ENCODE measurements at regions of chr10 and their contacts with region 1.

Region 1: GRCh38 chr10:72692057-72692910 is at the start of gene MCU:
- DNase-seq: peak; percentile 97
- H3K4me3 ChIP-seq: peak within 1 kb of the TSS; percentile 78 to 81
- H3K27ac ChIP-seq: peak within 1 kb of the TSS; percentile 87 to 91
- H3K4me1 ChIP-seq: peaks cover 6% of the 10 kb centered on the region
- H3K27me3 ChIP-seq: no peaks in the 10 kb centered on the region
- CTCF ChIP-seq: peak in 1 of 4 experiments; percentile 8
- POLR2A ChIP-seq: peak; percentile 94
- total RNA-seq, gene MCU: 11.0 to 24.2 TPM

Region 2: DNA sequence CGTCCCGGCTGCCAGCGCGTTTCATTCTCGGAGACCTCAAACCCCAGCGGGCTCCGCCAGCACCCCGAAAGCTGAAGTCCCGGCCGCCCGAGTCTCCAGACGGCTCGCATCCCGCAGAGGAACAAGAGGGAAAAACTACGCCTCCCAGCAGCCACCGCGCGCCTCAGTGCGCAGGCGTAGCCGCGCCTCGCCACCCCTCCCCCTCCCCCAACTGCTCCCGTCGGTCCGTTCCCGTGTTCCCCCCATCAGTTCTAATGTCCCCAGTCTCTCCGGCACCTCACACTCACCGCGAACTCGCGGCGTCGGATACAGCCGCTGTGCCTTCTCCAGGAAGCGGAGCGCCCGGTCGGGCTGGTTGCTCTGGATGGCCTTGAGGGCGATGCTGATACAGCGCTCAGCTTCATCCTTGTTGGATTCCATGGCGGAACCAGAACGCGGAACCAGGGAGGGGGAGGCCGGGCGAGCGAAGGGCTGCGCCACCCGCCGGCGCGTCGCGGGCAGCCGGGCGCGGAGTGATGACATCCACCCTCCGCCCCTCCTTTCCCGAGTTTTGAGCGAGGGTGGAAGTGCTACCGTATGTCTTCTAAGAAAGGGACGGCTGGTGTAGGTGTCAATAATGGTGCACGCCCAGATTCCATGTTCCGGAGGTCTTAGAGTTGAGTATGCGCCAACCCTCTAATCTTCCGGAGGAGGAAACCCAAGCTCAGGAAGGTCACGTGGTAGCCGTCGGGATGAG is 337.6 kb before region 1 on chr10 and contains the start of gene DNAJB12:
- intact Hi-C with region 1: loop called (anchors 5 kb)
- DNase-seq: peak; percentile 83
- H3K4me3 ChIP-seq: peak within 1 kb of the TSS; percentile 53 to 81
- H3K27ac ChIP-seq: peak within 1 kb of the TSS; percentile 91 to 97
- H3K4me1 ChIP-seq: peaks cover 11% of the 10 kb centered on the region
- H3K27me3 ChIP-seq: no peaks in the 10 kb centered on the region
- CTCF ChIP-seq: peak in 1 of 4 experiments; percentile 39
- POLR2A ChIP-seq: peak; percentile 76
- total RNA-seq, gene DNAJB12: 33.0 to 55.9 TPM

Region 3: DNA sequence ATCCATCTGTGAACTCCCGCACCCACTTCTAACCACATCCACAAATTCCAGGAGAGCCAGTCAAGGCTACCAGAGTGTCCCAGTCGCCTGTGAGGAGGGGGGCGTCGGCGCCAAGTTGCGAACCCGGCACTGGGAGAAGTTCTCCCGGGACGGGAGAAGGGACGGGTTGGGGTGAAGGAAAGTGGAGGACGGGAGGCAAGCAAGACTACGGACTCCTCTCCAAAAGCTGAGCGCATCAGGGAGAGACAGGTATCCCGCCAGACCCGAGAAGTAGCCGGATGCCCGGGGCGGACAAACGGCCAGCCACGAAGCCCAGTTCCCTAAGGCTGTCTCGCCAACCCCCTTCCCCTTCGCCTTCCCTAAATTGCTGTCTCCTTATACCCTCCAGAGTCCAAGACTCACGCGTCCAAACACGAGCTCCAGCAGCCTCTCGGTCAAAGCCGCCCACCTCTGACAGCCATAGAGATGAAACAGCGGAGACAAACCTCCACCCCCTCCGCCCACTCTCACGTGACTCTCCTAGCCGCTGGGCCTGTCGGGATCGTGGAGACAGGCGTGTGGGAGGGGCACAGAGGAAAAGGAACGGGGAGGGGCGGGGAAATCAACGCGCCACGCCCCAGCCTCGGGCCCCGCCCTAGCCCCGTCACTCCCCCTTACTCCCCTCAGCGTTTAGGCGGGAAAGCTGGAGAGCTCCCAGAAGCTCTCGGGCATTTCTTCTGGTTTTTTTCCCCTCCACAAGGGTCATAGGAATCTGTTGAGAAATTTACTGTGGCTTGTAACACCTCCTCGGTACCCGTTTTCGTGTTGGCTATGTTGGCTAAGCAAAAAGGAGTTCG is 66.5 kb before region 1 on chr10 and contains the start of gene MICU1:
- intact Hi-C with region 1: loop called (anchors 5 kb)
- DNase-seq: peak; percentile 96
- H3K4me3 ChIP-seq: peak within 1 kb of the TSS; percentile 72 to 76
- H3K27ac ChIP-seq: peak within 1 kb of the TSS; percentile 85 to 86
- H3K4me1 ChIP-seq: peaks cover 4% of the 10 kb centered on the region
- H3K27me3 ChIP-seq: no peaks in the 10 kb centered on the region
- CTCF ChIP-seq: no peak
- POLR2A ChIP-seq: peak; percentile 94
- total RNA-seq, gene MICU1: 41.0 to 42.0 TPM

Region 4: DNA sequence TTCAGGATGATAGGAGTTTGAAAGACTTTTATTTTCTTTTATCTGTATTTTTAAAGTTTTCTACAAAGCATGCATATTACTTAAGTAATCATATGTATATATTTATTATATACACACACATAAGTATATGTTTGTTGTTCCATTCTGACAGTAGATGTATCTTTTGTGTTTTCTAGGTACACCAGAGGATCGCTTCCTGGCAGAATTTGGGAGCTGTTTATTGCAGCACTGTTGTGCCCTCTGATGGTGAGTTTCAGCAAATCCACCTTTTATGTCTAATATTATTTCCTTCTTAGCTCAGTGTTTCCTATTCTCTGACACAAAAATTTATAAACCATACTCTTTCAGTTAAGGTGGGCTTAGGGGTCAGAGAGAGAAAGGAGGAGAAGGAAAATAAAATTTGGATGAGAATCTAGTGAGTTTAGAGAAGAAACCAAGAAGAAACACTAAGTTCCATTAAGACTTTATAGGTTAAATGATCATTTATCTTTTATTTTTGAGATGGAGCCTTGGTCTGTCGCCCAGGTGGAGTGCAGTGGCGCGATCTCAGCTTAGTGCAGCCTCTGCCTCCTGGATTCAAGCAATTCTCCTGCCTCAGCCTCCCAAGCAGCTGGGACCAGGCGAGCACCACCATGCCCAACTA is 142.0 kb after region 1 on chr10:
- intact Hi-C with region 1: loop called (anchors 2 kb)
- DNase-seq: peak; percentile 43
- H3K4me3 ChIP-seq: no peak overlapping the region
- H3K27ac ChIP-seq: no peak overlapping the region
- H3K4me1 ChIP-seq: no peaks in the 10 kb centered on the region
- H3K27me3 ChIP-seq: no peaks in the 10 kb centered on the region
- CTCF ChIP-seq: peak in 3 of 4 experiments; percentile 50 to 76 (median 75)
- POLR2A ChIP-seq: no peak

Region 5: DNA sequence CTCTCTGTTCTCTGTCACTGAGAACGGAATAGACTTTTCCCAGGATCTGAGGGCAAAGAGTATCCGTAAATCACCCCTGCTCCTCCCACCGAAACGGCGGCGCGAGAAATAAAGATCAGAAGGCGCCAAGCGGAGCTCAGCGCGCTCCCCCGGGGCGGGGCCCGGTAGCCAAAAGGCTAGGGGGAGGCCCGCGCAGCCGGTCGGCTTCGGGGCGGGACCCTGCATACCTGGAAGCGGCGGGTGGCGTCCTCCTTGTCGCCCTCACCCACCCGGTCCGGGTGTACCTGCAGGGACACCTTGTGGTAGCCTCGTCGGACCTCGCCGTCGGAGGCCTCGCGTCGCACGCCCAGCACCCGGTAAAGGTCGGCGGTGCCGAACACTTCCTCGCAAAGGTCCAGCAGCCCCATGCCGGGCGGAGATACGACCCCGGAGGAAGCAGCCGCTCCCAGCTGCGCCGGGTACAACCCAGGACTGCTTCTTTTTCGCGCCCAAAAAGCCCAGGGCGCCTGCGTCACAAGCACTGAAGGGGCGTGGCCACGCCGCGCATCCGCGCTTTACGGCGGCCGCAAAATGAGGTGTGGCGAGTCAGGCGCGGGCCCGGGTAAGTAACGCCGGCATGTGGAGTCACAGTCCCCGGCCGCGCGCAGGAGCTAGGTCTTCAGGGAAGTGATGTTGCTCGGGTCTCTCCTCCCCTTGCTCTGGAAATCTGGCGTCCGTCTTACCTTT is 554.7 kb after region 1 on chr10 and contains the start of gene DNAJC9:
- intact Hi-C with region 1: no loop called
- DNase-seq: peak; percentile 95
- H3K4me3 ChIP-seq: peak within 1 kb of the TSS; percentile 71 to 79
- H3K27ac ChIP-seq: peak within 1 kb of the TSS; percentile 81 to 83
- H3K4me1 ChIP-seq: peaks cover 14% of the 10 kb centered on the region
- H3K27me3 ChIP-seq: no peaks in the 10 kb centered on the region
- CTCF ChIP-seq: peak; percentile 7 to 52 (median 32)
- POLR2A ChIP-seq: peak; percentile 75
- total RNA-seq, gene DNAJC9: 17.4 to 26.2 TPM

Measured in prostate gland (tissue), 2 donors.